ENCODE measurements at regions of chr17 and their contacts with region 1.

Region 1: GRCh38 chr17:27996208-27997043 is 46.1 kb upstream of the NLK start:
- DNase-seq: no peak
- ATAC-seq: no peak
- H3K4me3 ChIP-seq: no peak overlapping the region
- H3K27ac ChIP-seq: no peak overlapping the region
- H3K4me1 ChIP-seq: peaks cover 0 to 16% of the 10 kb centered on the region in 2 experiments; a peak in 3 of 5 replicates
- H3K27me3 ChIP-seq: no peaks in the 10 kb centered on the region; a peak in 1 of 5 replicates
- CTCF ChIP-seq: no peak
- EP300 ChIP-seq: no peak
- POLR2A ChIP-seq: no peak
- RAD21 ChIP-seq: no peak

Region 2: GRCh38 chr17:27862004-27862403 is 134.4 kb before region 1 on chr17:
- CTCF ChIA-PET with region 1: no interaction called
- POLR2A ChIA-PET with region 1: no interaction called
- in situ Hi-C with region 1: no loop called
- intact Hi-C with region 1: no loop called
- DNase-seq: no peak
- ATAC-seq: no peak
- H3K4me3 ChIP-seq: no peak overlapping the region
- H3K27ac ChIP-seq: no peak overlapping the region
- H3K4me1 ChIP-seq: no peaks in the 10 kb centered on the region; a peak in 1 of 5 replicates
- H3K27me3 ChIP-seq: peaks cover 23 to 28% of the 10 kb centered on the region in 2 experiments
- CTCF ChIP-seq: no peak
- EP300 ChIP-seq: no peak
- POLR2A ChIP-seq: no peak
- RAD21 ChIP-seq: no peak

Region 3: DNA sequence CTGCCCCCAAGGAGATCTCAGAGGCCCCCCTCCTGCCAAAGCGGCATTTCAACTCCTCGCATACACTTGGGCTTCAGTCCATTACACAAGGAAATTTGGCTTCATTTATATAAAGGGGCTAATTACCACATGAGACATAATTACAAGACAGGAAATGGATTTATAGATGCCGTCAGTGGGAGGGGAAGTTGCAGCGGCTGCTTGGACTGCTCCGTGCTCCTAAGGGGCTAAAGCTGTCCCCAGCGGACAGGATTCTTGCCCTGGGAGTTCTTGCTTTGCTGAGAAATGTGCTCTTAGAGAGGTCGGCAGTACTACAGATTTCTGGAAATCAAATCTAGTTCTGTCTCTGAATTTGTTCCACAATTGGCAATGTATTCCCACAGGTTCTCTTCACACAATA is 11.1 kb before region 1 on chr17:
- CTCF ChIA-PET with region 1: no interaction called
- POLR2A ChIA-PET with region 1: interaction called, 12 read pairs
- in situ Hi-C with region 1: no loop called
- intact Hi-C with region 1: no loop called
- DNase-seq: peak in 1 of 4 experiments; percentile 55
- ATAC-seq: peak; percentile 55
- H3K4me3 ChIP-seq: no peak overlapping the region
- H3K27ac ChIP-seq: peak overlapping the region; percentile 89
- H3K4me1 ChIP-seq: peaks cover 45 to 60% of the 10 kb centered on the region in 2 experiments
- H3K27me3 ChIP-seq: no peaks in the 10 kb centered on the region
- CTCF ChIP-seq: no peak
- EP300 ChIP-seq: no peak
- POLR2A ChIP-seq: no peak
- RAD21 ChIP-seq: no peak